PC-9 (cell line): ENCODE measurements at regions of chr3 and their contacts with region 1.

Region 1: DNA sequence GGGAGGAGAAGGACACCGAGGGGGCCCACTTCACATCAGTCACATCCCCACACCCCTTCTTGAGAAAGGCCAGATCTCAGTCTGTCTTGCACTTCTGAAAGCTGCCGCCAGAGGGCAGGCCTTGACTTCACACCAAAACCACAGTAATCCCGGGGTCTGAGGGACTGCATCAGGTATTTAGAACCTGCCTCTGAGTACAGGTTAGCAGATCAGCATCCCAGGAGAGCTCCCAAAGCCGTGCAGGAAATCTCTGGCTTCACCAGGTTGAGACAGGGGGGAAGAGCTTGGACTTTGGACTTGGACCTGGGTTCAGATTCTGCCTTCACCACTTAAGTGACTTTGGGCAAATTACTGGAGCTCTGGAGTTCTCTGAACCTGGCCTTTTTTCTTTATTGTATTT is 50.3 kb downstream of the LHFPL4 start:
- DNase-seq: peak; percentile 46 to 73
- H3K4me3 ChIP-seq: no peak overlapping the region
- H3K27ac ChIP-seq: no peak overlapping the region
- H3K4me1 ChIP-seq: peaks cover 5% of the 10 kb centered on the region
- H3K27me3 ChIP-seq: peaks cover 15% of the 10 kb centered on the region
- CTCF ChIP-seq: peak; percentile 97

Region 2: GRCh38 chr3:9649791-9650521 is 146.7 kb after region 1 on chr3:
- CTCF ChIA-PET with region 1: no interaction called
- POLR2A ChIA-PET with region 1: no interaction called
- intact Hi-C with region 1: loop called (anchors 5 kb)
- DNase-seq: no peak
- H3K4me3 ChIP-seq: peak overlapping the region; percentile 95
- H3K27ac ChIP-seq: no peak overlapping the region
- H3K4me1 ChIP-seq: peaks cover 6% of the 10 kb centered on the region
- H3K27me3 ChIP-seq: no peaks in the 10 kb centered on the region
- CTCF ChIP-seq: no peak; the same call in 1 of the 2 replicates

Region 3: DNA sequence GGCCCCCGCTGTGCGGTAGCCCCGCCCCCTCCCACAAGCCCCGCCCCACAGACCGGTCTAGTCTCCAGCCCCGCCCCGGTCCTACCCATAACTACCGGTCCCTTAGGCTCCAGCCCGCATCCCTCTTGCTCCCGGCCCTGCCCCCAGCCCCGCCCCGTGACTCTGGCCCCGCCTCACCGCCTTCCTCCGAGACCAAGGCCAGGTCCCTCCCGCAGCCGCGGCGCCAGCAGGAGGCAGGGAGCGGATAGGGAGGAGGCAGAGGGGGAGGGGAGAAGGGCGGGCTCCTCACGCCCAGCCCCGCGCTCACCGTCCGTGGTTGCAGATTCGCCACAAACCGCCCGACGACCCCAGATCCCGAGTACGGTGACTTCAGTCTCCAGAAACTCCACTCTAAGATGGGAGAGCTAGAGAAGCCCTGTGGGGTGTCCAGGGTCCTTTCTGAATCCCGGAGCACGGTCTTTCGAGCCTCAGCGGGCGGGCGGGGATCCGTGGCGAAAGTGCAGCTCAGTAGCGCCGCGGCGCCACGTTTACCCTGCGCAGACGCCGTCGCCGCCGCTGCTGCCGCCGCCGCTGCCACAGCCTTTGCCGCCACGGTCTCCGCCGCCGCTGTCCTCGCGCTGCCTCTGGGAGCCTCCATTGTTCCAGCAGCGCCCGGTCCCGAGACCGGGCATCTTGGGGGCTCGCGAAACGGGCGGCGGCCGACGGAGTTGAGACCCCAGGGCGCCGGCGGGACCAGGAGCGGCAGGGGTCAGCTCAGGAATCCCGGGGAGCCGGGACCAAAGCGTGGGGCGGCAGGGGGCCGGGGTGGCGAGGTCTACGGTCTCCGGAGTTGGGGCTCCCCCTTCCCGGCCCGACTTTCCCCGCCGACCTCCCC is 228.2 kb after region 1 on chr3 and contains the start of gene BRPF1:
- CTCF ChIA-PET with region 1: no interaction called
- POLR2A ChIA-PET with region 1: no interaction called
- intact Hi-C with region 1: loop called (anchors 5 kb)
- DNase-seq: peak; percentile 91 to 98
- H3K4me3 ChIP-seq: peak within 1 kb of the TSS; percentile 95
- H3K27ac ChIP-seq: peak within 1 kb of the TSS; percentile 73
- H3K4me1 ChIP-seq: peaks cover 19% of the 10 kb centered on the region
- H3K27me3 ChIP-seq: no peaks in the 10 kb centered on the region
- CTCF ChIP-seq: 0 out of 2 replicates have a peak, but pooled peaks have one; percentile 13
- total RNA-seq, gene BRPF1: 15.9 and 18.3 TPM in 2 replicates

Region 4: DNA sequence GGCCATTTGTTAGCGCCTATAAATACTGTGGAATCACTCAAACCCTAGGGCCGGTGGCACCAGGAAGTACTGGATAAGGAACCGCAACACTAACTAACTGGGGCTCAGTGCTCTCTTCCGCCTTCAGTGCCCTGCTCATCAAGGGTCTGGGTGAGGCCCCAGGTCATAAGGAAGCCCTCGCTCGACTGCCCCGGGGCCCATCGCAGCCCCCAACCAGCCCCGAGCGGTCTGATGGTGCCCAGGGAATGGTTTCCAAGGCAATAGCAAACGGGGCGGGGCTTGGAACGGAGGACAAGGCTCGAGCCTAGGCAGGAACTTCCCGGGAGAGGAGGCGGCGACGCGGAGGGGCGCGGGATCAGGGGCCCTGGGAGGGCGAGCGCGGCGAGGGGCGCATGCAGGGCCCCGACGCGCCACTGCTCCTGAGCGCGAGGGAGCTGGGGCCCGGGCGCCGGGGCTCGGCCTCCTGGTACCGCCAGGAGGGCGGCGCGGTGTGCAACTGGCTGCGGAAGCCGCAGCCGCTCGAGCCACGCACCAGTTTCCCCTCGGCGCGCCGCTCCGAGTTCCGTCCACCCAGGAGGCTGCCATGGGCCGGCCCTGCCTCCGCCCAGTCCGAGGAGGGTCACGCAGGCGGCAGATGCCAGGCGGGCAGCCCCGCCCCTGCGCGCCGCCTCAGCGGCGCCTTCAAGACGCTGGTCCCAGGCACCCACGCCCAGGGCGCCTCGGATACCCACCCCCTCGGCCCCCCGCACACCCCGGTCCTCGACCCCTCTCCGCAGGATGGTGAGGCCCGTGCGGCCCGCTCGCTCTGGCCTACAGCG is 306.5 kb after region 1 on chr3 and contains the start of gene TTLL3:
- CTCF ChIA-PET with region 1: interaction called, 4 read pairs
- POLR2A ChIA-PET with region 1: no interaction called
- intact Hi-C with region 1: loop called (anchors 10 kb)
- DNase-seq: peak in 1 of 2 experiments; percentile 62
- H3K4me3 ChIP-seq: peak within 1 kb of the TSS; percentile 66
- H3K27ac ChIP-seq: peak within 1 kb of the TSS; percentile 62
- H3K4me1 ChIP-seq: peaks cover 19% of the 10 kb centered on the region
- H3K27me3 ChIP-seq: no peaks in the 10 kb centered on the region
- CTCF ChIP-seq: no peak
- total RNA-seq, gene TTLL3: 21.7 and 35.8 TPM in 2 replicates

Region 5: DNA sequence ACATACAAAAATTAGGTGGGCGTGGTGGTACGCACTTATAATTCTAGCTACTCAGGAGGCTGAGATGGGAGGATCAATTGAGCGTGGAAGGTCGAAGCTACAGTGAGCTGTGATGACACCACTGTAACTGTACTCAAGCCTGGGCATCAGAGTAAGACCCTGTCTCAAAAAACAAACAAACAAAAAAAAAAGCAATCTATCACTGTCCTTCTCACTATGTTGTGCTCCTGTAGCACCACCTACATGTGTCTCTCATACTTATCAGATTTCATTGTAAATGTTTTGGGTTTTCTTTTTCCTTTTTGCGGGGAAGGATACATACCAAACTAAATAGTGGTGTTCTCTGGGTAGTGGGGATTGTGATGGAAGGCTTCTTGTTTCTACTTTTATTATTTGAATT is 537.8 kb after region 1 on chr3:
- CTCF ChIA-PET with region 1: no interaction called
- POLR2A ChIA-PET with region 1: no interaction called
- intact Hi-C with region 1: loop called (anchors 2 kb)
- DNase-seq: no peak
- H3K4me3 ChIP-seq: no peak overlapping the region
- H3K27ac ChIP-seq: no peak overlapping the region
- H3K4me1 ChIP-seq: no peaks in the 10 kb centered on the region
- H3K27me3 ChIP-seq: no peaks in the 10 kb centered on the region
- CTCF ChIP-seq: no peak; the same call in 1 of the 2 replicates